Sciatic nerve (tissue), 2 donors: ENCODE measurements at regions of chr7 and their contacts with region 1.

Region 1: DNA sequence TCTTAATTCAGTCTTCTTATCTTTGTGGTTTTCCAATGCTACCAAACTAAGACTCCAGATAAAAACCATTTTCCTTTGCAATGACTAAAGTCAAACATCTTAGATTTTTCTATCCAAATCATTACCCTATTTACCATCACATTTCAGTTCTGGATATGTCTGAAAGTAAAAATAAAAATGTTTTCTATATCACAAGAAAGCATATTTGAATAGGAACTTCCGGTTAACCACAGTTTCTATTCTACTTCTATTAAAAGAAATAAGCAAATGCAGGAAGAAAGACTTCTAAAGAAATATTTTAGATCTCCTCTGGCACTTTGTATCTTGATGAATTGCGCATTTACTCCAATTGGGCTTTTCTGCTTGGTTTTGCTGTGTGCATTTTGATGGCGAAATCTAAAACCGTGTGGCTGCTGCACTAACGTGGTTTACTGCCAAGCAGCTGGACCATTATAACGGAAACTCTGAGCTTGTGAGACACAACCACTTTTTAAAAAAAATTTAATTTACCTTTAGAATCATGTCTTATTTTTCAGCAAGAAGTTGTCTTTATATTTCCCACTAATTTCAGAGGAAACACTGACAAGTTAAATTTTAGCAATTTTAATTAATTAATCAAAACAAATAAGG is 146.1 kb downstream of the VPS50 start:
- DNase-seq: no peak
- ATAC-seq: no peak

Region 2: GRCh38 chr7:92557249-92557648 is 821.0 kb before region 1 on chr7:
- intact Hi-C with region 1: no loop called
- DNase-seq: no peak
- ATAC-seq: no peak

Region 3: DNA sequence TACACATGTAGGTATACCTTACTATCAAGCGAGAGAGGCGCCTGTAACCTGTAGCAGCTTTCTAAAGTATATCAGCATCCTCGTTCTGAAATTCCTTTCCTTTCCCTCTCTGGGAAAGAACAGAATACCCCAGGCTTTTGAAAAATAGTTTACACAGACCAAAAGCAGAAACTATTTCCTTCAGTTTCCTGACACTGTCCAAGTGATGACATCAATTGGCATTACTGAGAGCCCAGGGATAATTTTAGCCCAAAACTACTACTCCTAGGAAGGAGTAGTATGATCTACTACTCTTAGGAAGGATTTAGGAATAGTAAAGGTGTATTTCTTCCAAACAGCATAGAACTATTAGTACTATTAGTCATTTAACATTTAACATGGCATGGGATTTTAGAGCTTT is 549.3 kb after region 1 on chr7:
- intact Hi-C with region 1: loop called (anchors 5 kb)
- DNase-seq: no peak
- ATAC-seq: peak; percentile 79